Gastrocnemius medialis (tissue), 4 donors: ENCODE measurements at regions of chr5 and their contacts with region 1.

Region 1: DNA sequence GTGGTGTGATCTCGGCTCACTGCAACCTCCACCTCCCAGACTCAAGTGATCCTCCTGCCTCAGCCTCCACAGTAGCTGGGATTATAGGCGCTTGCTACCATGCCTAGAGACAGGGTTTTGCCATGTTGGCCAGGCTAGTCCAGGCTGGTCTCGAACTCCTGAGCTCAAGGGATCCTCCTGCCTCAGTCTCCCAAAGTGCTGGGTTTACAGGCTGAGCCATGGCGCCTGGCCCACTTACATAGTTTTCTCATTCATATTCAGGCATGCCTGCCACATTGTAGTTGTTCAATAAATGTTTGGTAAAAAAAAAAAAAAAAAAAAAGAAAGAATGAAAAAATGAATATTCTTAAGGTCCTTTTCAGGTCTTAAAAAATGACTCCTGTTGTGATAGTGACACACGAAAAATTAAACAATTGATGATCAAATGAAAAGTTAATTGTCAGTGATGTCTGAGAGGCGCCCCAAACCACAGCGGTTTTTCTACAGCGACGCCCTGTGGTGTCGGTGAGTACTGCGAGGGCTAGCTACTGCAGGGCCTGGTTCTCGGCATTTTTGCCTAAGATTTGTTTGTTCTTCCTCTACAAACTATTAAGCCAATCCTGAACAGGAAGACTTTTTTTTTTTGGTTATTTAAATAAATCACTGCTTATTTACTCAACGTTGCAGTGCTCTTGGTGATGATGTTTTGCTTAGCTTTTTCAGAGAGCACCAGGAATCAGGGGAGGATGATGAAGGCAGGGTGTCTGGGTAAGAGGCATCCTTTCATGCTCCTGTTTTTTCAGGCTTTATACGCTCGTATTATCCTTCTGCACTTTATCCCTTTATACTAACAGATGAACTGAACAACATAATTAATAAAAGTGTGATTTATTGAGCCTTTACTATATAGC is 67.0 kb upstream of the DPYSL3 start:
- DNase-seq: peak in 1 of 2 donors; percentile 15
- ATAC-seq: peak in 1 of 2 donors; percentile 49
- H3K4me3 ChIP-seq: no peak overlapping the region
- H3K27ac ChIP-seq: no peak overlapping the region
- H3K4me1 ChIP-seq: peaks cover 0 to 3% of the 10 kb centered on the region in 2 donors
- H3K27me3 ChIP-seq: no peaks in the 10 kb centered on the region
- CTCF ChIP-seq: peak; percentile 43 to 80 (median 65)
- POLR2A ChIP-seq: no peak

Region 2: GRCh38 chr5:146533260-146533857 is 1043.5 kb before region 1 on chr5:
- in situ Hi-C with region 1: loop called in 1 of 4 experiments (anchors 25 kb)
- intact Hi-C with region 1: no loop called
- DNase-seq: peak; percentile 11 to 17
- ATAC-seq: peak in 1 of 2 donors; percentile 72
- H3K4me3 ChIP-seq: no peak overlapping the region
- H3K27ac ChIP-seq: no peak overlapping the region
- H3K4me1 ChIP-seq: no peaks in the 10 kb centered on the region
- H3K27me3 ChIP-seq: no peaks in the 10 kb centered on the region
- CTCF ChIP-seq: peak; percentile 26 to 62 (median 44)
- POLR2A ChIP-seq: no peak

Region 3: DNA sequence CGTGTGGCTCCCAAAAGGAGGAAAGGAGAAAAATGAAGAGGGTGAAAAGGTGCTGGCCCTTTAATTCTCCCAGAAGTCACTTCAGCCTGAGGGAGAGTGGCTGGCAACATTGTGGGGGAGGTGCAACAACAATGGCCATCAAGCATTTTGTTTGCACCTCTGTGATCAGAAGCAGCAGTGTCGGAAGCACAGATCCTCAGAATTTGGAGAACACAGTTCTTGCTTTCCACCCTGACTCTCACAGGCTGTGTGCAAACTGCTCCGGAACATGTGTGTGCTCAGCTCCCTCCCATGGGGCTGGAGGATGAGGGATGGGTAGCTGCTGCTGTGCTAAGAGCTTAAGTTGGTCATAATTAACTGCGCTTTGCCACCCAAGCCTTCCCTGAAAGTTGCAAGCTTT is 194.1 kb before region 1 on chr5:
- in situ Hi-C with region 1: loop called in 1 of 4 experiments (anchors 10 kb)
- intact Hi-C with region 1: no loop called
- DNase-seq: no peak
- ATAC-seq: no peak
- H3K4me3 ChIP-seq: no peak overlapping the region
- H3K27ac ChIP-seq: no peak overlapping the region
- H3K4me1 ChIP-seq: no peaks in the 10 kb centered on the region
- H3K27me3 ChIP-seq: no peaks in the 10 kb centered on the region
- CTCF ChIP-seq: no peak
- POLR2A ChIP-seq: no peak